Heart left ventricle (tissue), 16 donors: ENCODE measurements at regions of chr2 and their contacts with region 1.

Region 1: GRCh38 chr2:201231781-201232466 is 28.4 kb upstream of the CASP8 start:
- DNase-seq: peak; percentile 86 to 91 (median 89)
- ATAC-seq: peak; percentile 82 to 90 (median 90)
- H3K4me3 ChIP-seq: peak overlapping the region in 3 of 12 donors; percentile 5 to 20 (median 19)
- H3K27ac ChIP-seq: peak overlapping the region in 8 of 12 donors; percentile 12 to 66 (median 36)
- H3K4me1 ChIP-seq: peaks cover 0 to 63% (median 15%) of the 10 kb centered on the region in 12 donors
- H3K27me3 ChIP-seq: no peaks in the 10 kb centered on the region
- CTCF ChIP-seq: peak; percentile 81 to 93 (median 88)
- POLR2A ChIP-seq: no peak

Region 2: DNA sequence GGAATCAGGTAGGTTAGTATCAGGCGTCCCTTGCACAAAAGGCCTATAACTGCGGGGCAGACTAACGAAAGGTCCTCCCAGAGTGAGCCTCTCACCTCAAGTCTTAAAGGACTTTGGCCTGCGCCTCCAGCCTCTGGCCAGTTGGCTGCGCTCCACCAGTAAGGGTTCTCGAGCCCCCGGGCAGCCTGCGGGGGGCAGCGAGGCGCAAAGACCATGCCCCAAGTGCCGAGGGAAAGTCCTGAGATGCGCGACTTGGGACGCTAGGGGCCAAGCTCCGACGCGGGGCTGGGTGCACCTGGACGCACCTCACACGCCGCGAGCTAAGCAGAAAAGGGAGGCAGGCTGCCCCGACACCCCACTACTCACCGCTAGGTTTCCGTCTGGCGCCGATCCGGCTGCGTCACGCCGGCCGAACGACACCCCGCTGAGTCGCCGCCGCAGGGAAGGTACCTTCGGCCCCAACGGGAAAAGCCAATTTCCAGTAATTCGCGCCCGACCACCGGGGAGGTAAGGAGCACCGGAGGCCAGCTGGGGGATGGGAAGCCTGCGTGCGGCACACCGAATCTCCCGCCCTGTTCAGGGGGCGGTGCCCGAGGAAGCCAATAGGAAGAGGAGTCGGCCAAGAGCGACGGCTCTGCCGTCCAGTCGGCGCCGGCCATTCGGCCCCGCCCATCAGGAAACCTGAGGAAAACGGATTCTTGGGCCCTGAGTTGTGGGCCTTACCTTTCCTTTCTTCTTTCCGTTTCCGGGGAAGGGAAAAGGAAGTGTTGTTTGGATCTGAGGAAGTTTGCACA is 268.6 kb before region 1 on chr2 and contains the start of gene ORC2:
- intact Hi-C with region 1: loop called in 2 of 10 experiments (anchors 2 to 5 kb)
- DNase-seq: peak; percentile 94 to 97 (median 95)
- ATAC-seq: peak; percentile 98 to 99 (median 99)
- H3K4me3 ChIP-seq: peak within 1 kb of the TSS; percentile 69 to 97 (median 88)
- H3K27ac ChIP-seq: peak within 1 kb of the TSS; percentile 83 to 97 (median 92)
- H3K4me1 ChIP-seq: peaks cover 0 to 53% (median 35%) of the 10 kb centered on the region in 12 donors
- H3K27me3 ChIP-seq: no peaks in the 10 kb centered on the region
- CTCF ChIP-seq: peak; percentile 24 to 61 (median 50)
- POLR2A ChIP-seq: peak in 1 of 2 donors; percentile 51
- total RNA-seq, gene ORC2: 6.7 to 38.0 (median 24.0) TPM

Region 3: GRCh38 chr2:201182650-201183364 is 49.1 kb before region 1 on chr2 and contains the start of gene CASP10:
- intact Hi-C with region 1: loop called (anchors 1 to 5 kb)
- DNase-seq: peak in 1 of 5 donors; percentile 23
- ATAC-seq: peak; percentile 52 to 88 (median 74)
- H3K4me3 ChIP-seq: peak within 1 kb of the TSS; percentile 12 to 73 (median 61)
- H3K27ac ChIP-seq: peak within 1 kb of the TSS; percentile 33 to 92 (median 74)
- H3K4me1 ChIP-seq: peaks cover 0 to 49% (median 1%) of the 10 kb centered on the region in 12 donors
- H3K27me3 ChIP-seq: no peaks in the 10 kb centered on the region
- CTCF ChIP-seq: peak in 11 of 12 donors; percentile 2 to 69 (median 53)
- POLR2A ChIP-seq: peak in 1 of 2 donors; percentile 42
- total RNA-seq, gene CASP10: 4.3 to 24.0 (median 5.8) TPM

Region 4: GRCh38 chr2:201363857-201364560 is 132.1 kb after region 1 on chr2:
- intact Hi-C with region 1: loop called (anchors 1 to 5 kb)
- DNase-seq: no peak
- ATAC-seq: peak in 3 of 4 donors; percentile 62 to 65 (median 64)
- H3K4me3 ChIP-seq: no peak overlapping the region
- H3K27ac ChIP-seq: no peak overlapping the region
- H3K4me1 ChIP-seq: peaks cover 0 to 10% (median 0%) of the 10 kb centered on the region in 12 donors
- H3K27me3 ChIP-seq: no peaks in the 10 kb centered on the region
- CTCF ChIP-seq: peak; percentile 64 to 85 (median 78)
- POLR2A ChIP-seq: no peak

Region 5: DNA sequence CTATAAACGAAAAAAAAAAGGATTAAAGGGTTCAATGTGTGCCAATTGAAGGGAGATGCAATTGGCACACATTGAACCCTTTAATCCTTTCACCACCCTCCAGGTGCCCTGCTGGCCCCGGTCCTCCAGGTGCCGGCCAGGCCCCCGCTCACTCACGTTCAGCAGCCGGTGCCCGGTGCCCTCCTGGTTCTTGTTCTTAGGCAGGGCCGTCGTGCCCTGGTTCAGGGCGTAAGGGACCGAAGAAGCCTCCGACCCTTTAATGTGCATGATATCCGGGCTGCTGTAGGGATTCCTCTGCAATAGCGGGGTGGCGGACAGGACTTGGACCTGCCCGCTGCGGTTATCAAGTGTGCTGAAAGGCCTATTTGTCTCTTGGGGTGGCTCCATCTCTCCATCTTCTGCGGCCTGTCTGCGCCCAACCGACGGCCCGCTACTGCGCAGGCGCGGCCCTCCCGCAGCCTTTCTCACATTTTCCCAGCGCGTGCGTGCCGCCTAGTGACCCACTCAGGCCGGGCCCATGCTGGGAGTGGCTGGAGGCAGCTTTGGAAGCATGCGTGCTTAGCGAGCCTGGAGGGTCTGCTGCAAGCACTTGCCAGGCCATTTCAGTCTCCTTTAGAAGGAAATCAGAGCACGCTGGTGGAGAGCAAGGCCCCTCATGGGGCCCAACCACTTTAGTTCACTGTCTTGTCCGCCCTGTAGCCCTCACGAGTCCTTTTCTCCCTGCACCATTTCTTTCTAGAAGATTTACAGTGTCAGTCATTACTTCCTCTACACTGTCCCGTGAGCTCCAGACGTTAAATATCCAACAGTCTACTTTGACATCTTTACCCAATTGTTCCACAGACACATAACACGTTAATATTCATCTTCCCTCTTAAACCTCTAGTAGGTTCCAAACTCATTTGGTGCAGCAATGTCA is 387.1 kb after region 1 on chr2:
- intact Hi-C with region 1: loop called in 6 of 10 experiments (anchors 2 to 10 kb)
- DNase-seq: peak; percentile 72 to 90 (median 86)
- ATAC-seq: peak; percentile 77 to 98 (median 96)
- H3K4me3 ChIP-seq: peak overlapping the region in 10 of 12 donors; percentile 23 to 59 (median 42)
- H3K27ac ChIP-seq: peak overlapping the region in 3 of 12 donors; percentile 18 to 34 (median 27)
- H3K4me1 ChIP-seq: peaks cover 0 to 8% (median 0%) of the 10 kb centered on the region in 12 donors
- H3K27me3 ChIP-seq: no peaks in the 10 kb centered on the region
- CTCF ChIP-seq: peak in 11 of 12 donors; percentile 18 to 68 (median 49)
- POLR2A ChIP-seq: no peak